Sciatic nerve (tissue), 2 donors: ENCODE measurements at regions of chr1 and their contacts with region 1.

Region 1: GRCh38 chr1:3432306-3432705 is 22.2 kb upstream of the ARHGEF16 start:
- DNase-seq: no peak
- ATAC-seq: no peak

Region 2: DNA sequence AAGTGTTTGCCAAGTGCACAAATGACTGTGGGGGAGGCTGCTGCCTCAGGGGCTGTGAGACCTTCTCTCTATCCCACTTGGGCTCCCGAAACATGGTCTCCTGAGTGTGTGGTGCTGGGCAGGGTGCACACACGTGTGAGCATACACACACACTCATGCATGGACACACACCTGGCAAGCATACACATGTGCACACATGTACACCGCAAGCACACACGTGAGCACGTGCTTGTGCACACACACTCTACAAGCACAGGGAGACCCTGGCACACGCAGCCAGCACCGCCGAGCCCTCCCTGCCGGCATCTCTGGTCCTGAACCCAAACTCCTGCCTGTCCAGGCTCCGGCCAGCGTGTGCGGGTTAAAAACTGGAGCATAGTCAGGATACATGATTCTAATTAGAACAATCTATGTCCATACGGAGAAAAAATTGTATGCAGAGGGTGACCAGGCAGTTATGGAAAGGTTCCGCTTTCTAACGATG is 551.5 kb before region 1 on chr1:
- intact Hi-C with region 1: loop called (anchors 1 kb)
- DNase-seq: no peak
- ATAC-seq: no peak